WTC11 (cell line): ENCODE measurements at regions of chr22 and their contacts with region 1.

Region 1: GRCh38 chr22:46845296-46846149 is 83.1 kb downstream of the TBC1D22A start:
- DNase-seq: no peak
- ATAC-seq: no peak
- H3K4me3 Mint-ChIP-seq: no peak overlapping the region
- H3K27ac Mint-ChIP-seq: 0 out of 2 replicates have a peak overlapping the region, but pooled peaks have one; percentile 25
- H3K4me1 Mint-ChIP-seq: peaks cover 22% of the 10 kb centered on the region
- H3K27me3 Mint-ChIP-seq: no peaks in the 10 kb centered on the region
- CTCF ChIP-seq: no peak

Region 2: GRCh38 chr22:46774253-46774979 is 71.1 kb before region 1 on chr22:
- CTCF ChIA-PET with region 1: no interaction called
- POLR2A ChIA-PET with region 1: no interaction called
- DNase-seq: no peak
- ATAC-seq: no peak
- H3K4me3 Mint-ChIP-seq: no peak overlapping the region
- H3K27ac Mint-ChIP-seq: peak overlapping the region; percentile 84
- H3K4me1 Mint-ChIP-seq: peaks cover 15% of the 10 kb centered on the region
- H3K27me3 Mint-ChIP-seq: no peaks in the 10 kb centered on the region
- CTCF ChIP-seq: no peak

Region 3: GRCh38 chr22:46827136-46827780 is 18.3 kb before region 1 on chr22:
- CTCF ChIA-PET with region 1: interaction called, 20 read pairs
- POLR2A ChIA-PET with region 1: no interaction called
- DNase-seq: peak; percentile 86
- ATAC-seq: peak; percentile 97
- H3K4me3 Mint-ChIP-seq: no peak overlapping the region
- H3K27ac Mint-ChIP-seq: peak overlapping the region; percentile 37; the same call in 1 of the 2 replicates
- H3K4me1 Mint-ChIP-seq: peaks cover 26% of the 10 kb centered on the region
- H3K27me3 Mint-ChIP-seq: no peaks in the 10 kb centered on the region
- CTCF ChIP-seq: peak; percentile 47

Region 4: GRCh38 chr22:46833228-46833627 is 12.3 kb before region 1 on chr22:
- CTCF ChIA-PET with region 1: interaction called, 20 read pairs
- POLR2A ChIA-PET with region 1: no interaction called
- DNase-seq: peak; percentile 67
- ATAC-seq: peak; percentile 95
- H3K4me3 Mint-ChIP-seq: no peak overlapping the region
- H3K27ac Mint-ChIP-seq: no peak overlapping the region
- H3K4me1 Mint-ChIP-seq: peaks cover 25% of the 10 kb centered on the region
- H3K27me3 Mint-ChIP-seq: no peaks in the 10 kb centered on the region; the same call in 1 of the 2 replicates
- CTCF ChIP-seq: no peak

Region 5: GRCh38 chr22:46860562-46860961 is 15.0 kb after region 1 on chr22:
- CTCF ChIA-PET with region 1: no interaction called
- POLR2A ChIA-PET with region 1: no interaction called
- DNase-seq: no peak
- ATAC-seq: no peak
- H3K4me3 Mint-ChIP-seq: no peak overlapping the region
- H3K27ac Mint-ChIP-seq: peak overlapping the region; percentile 55; the same call in 1 of the 2 replicates
- H3K4me1 Mint-ChIP-seq: peaks cover 20% of the 10 kb centered on the region
- H3K27me3 Mint-ChIP-seq: no peaks in the 10 kb centered on the region; the same call in 1 of the 2 replicates
- CTCF ChIP-seq: no peak